Aorta (tissue), 5 donors: ENCODE measurements at regions of chr2 and their contacts with region 1.

Region 1: GRCh38 chr2:120606931-120607330 is 128.7 kb upstream of the GLI2 start:
- DNase-seq: peak; percentile 49 to 73
- ATAC-seq: peak; percentile 26
- H3K4me3 ChIP-seq: no peak overlapping the region
- H3K27ac ChIP-seq: no peak overlapping the region
- H3K4me1 ChIP-seq: no peaks in the 10 kb centered on the region
- H3K27me3 ChIP-seq: no peaks in the 10 kb centered on the region

Region 2: DNA sequence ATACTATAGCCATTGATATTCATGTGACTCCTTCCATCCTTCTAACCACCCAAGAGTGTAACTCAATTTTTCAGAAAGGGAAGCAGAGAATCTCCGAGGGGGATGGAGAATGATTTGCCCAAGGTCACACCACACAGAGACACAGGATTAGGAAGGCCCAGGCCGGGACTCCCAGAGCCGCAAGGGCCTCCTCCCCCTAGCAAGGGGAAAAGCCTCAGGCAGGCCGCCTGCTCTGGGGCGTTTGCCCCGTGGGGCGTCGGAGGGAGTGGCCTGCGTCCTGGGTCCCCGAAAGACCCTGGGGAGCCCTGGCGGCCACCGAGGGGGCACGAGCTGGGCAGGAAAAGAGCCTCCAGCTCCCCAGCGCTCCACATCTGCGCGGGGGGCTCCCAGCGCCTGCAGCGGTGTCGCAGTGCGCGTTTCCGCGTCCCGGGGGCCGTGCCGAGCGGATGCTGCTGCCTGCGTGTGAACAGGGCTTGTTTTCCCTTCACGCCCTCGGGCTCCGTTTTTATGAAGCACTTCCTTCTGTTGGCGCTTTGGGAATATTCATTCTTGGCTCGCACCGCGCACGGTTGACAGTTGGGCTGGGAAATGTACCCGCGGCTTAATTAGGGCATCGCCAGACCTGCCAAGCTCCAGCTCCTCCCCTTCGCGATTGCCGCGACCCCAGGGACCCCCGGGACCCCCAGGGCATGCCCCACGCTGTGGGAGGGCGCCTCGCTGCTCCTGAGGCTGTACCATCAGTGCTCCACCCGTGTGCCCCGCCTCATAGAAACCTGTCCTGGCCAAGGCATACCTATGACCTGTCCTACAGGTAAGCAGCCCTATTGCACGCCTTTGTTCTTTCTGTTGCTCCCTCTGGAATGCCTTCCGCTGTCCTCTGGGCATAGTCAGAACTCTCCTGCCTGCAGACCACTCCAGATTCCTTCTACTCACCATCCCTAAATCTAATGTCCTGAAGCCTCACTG is 30.1 kb before region 1 on chr2:
- intact Hi-C with region 1: loop called in 1 of 2 experiments (anchors 1 kb)
- DNase-seq: no peak
- ATAC-seq: peak; percentile 58
- H3K4me3 ChIP-seq: peak overlapping the region in 1 of 2 donors; percentile 5
- H3K27ac ChIP-seq: no peak overlapping the region
- H3K4me1 ChIP-seq: no peaks in the 10 kb centered on the region
- H3K27me3 ChIP-seq: no peaks in the 10 kb centered on the region

Region 3: GRCh38 chr2:120656273-120656950 is 49.5 kb after region 1 on chr2:
- intact Hi-C with region 1: no loop called
- DNase-seq: no peak
- ATAC-seq: no peak
- H3K4me3 ChIP-seq: no peak overlapping the region
- H3K27ac ChIP-seq: no peak overlapping the region
- H3K4me1 ChIP-seq: peaks cover 0 to 2% of the 10 kb centered on the region in 2 donors
- H3K27me3 ChIP-seq: no peaks in the 10 kb centered on the region